ENCODE measurements at regions of chr14 and their contacts with region 1.

Region 1: GRCh38 chr14:35121887-35122695 is at the starts of genes PPP2R3C and PRORP:
- DNase-seq: peak; percentile 77 to 98 (median 92)
- ATAC-seq: peak; percentile 83 to 85
- H3K4me3 Mint-ChIP-seq: peak within 1 kb of the TSS; percentile 98 to 100 (median 100)
- H3K27ac Mint-ChIP-seq: peak within 1 kb of the TSS; percentile 99 to 100 (median 100)
- H3K4me1 Mint-ChIP-seq: peaks cover 31 to 86% (median 74%) of the 10 kb centered on the region in 4 donors
- H3K27me3 Mint-ChIP-seq: no peaks in the 10 kb centered on the region
- polyA plus RNA-seq, gene PPP2R3C: 45.6 to 57.9 (median 52.7) TPM
- polyA plus RNA-seq, gene PRORP: 44.3 to 55.4 (median 49.7) TPM

Region 2: GRCh38 chr14:35046048-35046741 is 75.9 kb before region 1 on chr14 and contains the start of gene FAM177A1:
- POLR2A ChIA-PET with region 1: interaction called, 30 read pairs
- DNase-seq: peak; percentile 93 to 100 (median 99)
- ATAC-seq: peak; percentile 81 to 89
- H3K4me3 Mint-ChIP-seq: peak within 1 kb of the TSS; percentile 83 to 98 (median 96)
- H3K27ac Mint-ChIP-seq: peak within 1 kb of the TSS; percentile 98 to 100 (median 99)
- H3K4me1 Mint-ChIP-seq: peaks cover 5 to 33% (median 30%) of the 10 kb centered on the region in 4 donors
- H3K27me3 Mint-ChIP-seq: no peaks in the 10 kb centered on the region
- polyA plus RNA-seq, gene FAM177A1: 32.6 to 59.8 (median 41.0) TPM

Region 3: DNA sequence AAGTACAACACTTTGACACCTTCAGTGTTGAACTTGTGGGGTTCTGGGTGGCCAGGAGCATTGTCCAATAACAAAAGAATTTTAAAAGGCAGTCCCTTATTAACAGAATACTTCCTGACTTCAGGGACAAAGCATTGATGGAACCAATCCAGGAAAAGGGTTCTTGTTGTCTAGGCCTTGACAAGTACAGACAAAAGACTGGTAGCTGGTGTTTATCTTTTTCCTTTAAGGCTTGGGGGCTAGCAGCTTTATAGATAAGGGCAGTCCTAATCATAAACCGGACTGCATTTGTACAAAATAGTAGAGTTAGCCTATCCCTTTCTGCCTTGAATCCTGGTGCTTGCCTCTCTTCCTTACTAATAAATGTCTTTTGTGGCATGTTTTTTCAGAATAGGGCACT is 48.6 kb before region 1 on chr14:
- POLR2A ChIA-PET with region 1: no interaction called
- DNase-seq: no peak
- ATAC-seq: no peak
- H3K4me3 Mint-ChIP-seq: no peak overlapping the region
- H3K27ac Mint-ChIP-seq: peak overlapping the region in 1 of 10 donors; percentile 32
- H3K4me1 Mint-ChIP-seq: no peaks in the 10 kb centered on the region
- H3K27me3 Mint-ChIP-seq: no peaks in the 10 kb centered on the region

Region 4: DNA sequence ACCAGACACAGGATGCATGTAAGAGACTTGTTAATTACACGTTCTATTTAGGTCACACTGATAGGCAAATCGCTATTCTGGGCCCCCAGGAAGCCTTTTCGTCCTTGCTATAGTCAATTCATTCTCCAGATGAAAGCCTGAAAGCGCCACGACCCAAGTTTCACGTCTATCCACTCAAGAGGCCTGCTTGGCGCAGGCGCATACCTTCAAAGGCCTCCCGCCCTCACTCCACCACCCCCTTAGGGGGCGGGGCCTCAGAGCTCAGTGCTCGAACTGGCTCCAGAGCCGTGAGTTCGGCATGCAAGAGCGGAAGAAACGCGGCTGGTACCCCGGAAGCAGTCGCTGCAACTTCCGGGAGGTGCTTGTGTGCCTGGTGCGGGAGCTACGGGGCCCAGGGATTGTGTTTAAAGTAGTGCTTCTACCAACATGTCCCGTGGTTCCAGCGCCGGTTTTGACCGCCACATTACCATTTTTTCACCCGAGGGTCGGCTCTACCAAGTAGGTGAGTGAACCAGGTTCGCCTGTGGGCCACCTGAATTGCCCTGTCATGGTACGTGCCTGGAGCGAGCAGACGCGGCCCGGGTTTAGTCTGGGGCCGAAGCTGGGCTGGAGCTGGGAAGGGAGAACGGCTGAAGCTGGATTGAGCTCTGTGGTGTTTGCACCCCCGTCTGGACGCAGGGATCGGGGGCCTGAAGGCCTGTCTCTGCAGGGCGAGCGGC is 170.1 kb after region 1 on chr14 and contains the start of gene PSMA6:
- POLR2A ChIA-PET with region 1: interaction called, 22 read pairs
- DNase-seq: peak; percentile 94 to 100 (median 99)
- ATAC-seq: peak; percentile 93 to 94
- H3K4me3 Mint-ChIP-seq: peak within 1 kb of the TSS; percentile 95 to 98 (median 98)
- H3K27ac Mint-ChIP-seq: peak within 1 kb of the TSS; percentile 94 to 99 (median 98)
- H3K4me1 Mint-ChIP-seq: peaks cover 8 to 60% (median 46%) of the 10 kb centered on the region in 4 donors
- H3K27me3 Mint-ChIP-seq: no peaks in the 10 kb centered on the region
- polyA plus RNA-seq, gene PSMA6: 256 to 378 (median 273) TPM

Region 5: DNA sequence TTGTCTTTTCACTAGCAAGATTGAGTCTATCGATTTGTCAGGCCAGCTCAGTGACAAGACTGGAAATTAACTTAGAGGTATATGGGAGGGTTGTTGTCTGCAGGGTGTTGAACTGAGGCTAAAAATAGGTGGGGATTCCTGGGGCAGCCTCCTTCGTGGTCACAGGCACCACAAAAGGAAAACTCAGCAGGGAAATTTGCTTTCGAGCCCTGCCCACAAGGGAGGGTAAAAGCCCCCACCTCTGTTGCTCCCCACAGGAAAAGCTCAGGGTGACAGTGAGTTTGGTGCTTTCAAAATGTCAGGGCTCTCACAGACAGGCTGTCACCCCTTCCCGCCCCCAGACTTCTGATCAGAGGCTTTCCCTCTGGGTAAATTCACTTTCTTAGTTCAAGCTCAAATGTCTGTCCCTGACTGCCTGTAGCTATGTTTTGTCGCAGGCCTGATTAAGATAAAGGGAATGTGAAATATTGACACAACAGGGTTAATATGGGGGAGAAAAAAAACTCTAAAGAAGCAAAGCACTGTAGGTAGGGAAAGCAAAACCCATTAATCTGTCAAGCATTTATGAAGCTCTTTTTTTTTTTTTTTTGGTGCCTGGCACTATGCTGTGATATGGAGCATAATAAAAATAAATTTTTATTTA is 294.1 kb after region 1 on chr14:
- POLR2A ChIA-PET with region 1: interaction called, 11 read pairs
- DNase-seq: peak in 8 of 10 donors; percentile 15 to 73 (median 37)
- ATAC-seq: peak; percentile 58 to 70
- H3K4me3 Mint-ChIP-seq: peak overlapping the region; percentile 36 to 80 (median 72)
- H3K27ac Mint-ChIP-seq: peak overlapping the region; percentile 85 to 97 (median 94)
- H3K4me1 Mint-ChIP-seq: peaks cover 32 to 47% (median 42%) of the 10 kb centered on the region in 4 donors
- H3K27me3 Mint-ChIP-seq: no peaks in the 10 kb centered on the region

Measured in naive thymus-derived CD8-positive, alpha-beta T cell (primary cell).